Sciatic nerve (tissue), 2 donors: ENCODE measurements at regions of chr17 and their contacts with region 1.

Region 1: GRCh38 chr17:5584383-5585286 is at the start of gene NLRP1:
- DNase-seq: peak; percentile 91
- ATAC-seq: peak; percentile 98
- total RNA-seq, gene NLRP1: 51.4 TPM

Region 2: DNA sequence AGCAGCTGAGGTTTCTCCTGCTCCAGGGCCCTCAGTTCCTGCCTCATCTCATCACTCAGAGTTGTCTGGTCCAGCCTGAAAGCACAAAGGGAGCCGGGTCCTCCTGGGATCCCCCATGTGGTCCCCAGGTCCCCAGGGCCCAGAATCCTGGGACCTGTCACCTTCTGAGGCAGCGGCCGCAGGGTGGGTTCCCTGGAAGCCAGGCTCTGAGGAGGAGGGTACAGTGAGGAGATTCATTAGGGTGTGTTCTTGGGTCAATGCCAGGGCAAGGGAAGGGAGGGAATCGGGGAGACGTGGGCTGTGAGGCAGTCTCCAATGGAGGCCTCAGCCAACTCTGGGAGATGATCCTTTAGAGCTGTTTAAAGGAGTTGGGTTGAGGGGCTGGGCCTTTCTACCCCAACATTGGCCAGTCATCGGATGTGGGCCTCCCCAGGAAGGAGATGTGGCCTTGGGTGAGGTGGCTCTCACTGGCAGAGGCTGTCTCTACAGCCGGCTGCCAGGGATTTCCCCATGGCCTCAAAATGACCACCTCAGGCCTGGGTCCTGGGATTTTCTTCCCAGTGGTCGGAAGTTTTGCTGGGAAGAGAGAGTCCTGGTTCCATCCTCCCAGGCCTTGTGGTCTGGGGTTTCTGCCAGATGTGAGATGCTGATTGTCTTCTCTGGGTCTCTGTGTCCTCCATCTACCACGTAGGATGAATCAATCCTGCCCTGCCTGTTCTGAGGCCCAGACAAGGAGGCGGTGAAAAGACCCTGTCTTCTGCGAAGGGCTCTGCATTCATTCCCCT is 47.6 kb before region 1 on chr17:
- intact Hi-C with region 1: no loop called
- DNase-seq: peak; percentile 40
- ATAC-seq: no peak

Region 3: DNA sequence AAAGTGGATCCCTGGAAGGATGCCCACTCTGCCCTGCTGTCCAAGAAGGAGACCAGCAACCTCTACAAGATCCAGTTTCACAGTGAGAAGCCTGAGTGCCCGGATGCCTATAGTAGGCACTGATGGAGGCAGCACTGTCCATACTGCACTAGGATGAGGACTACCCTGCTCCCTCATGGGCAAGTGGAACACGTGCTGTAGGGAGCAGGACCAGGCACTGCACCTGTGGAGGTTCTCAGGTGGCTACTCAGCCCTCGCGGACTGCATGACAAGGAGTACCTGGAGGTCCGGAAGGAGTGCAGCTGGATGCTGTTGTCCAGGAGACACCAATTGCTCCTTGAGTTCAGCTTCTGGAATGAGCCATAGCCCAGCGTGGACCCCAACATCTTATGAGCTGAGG is 145.7 kb after region 1 on chr17:
- intact Hi-C with region 1: no loop called
- DNase-seq: no peak
- ATAC-seq: no peak

Region 4: DNA sequence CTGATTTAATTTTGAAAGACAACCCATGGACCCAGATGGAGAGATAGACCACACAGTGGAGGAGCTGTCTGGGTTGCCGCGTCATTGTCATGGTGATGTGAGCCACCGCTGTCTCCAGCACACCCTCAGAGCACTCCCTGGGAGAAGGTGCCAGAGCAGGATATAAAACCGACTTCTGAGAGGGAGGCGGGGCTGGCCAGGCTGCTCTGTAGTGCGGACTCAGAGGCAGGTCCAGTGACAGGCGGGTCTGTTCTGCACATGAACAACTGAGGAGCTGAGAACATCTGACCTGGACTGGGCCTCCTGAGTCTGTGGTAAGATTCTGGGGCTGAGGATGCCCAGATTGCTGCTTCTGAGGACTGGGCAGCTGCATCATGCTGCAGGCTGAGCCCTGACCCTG is 216.0 kb after region 1 on chr17:
- intact Hi-C with region 1: no loop called
- DNase-seq: no peak
- ATAC-seq: no peak

Region 5: GRCh38 chr17:6421700-6422604 is 837.3 kb after region 1 on chr17:
- intact Hi-C with region 1: loop called (anchors 5 kb)
- DNase-seq: peak; percentile 86
- ATAC-seq: peak; percentile 77